PC-3 (cell line): ENCODE measurements at regions of chr12 and their contacts with region 1.

Region 1: DNA sequence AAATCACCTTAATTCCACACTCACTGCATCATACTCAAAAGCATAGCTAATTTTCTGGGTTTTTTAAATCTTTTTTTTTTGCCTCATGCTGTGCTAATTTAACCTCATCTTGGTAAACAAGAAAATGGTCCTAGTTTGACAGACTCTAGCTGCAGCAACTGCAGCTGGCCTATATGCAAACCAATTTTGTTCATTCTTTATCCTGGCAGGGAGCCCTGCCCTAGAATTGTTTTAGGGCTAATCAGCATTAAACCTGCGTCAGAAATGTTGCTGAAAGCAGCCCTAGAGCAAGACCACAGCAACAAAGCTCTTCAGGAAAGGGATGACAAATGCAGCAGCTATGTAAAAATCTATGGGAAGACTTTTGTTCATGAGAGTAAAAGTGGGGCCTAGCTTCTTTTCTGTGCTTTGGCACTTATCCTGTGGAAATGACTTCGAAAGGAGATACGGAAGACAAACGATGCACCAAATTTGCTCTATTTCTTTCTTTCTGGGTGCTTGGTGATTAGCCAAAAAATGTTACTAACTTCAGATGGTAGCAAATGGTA is 72.2 kb downstream of the DENND5B start:
- DNase-seq: peak; percentile 95
- ATAC-seq: peak; percentile 86
- H3K4me3 ChIP-seq: no peak overlapping the region
- H3K27ac ChIP-seq: peak overlapping the region; percentile 98
- H3K4me1 ChIP-seq: peaks cover 45% of the 10 kb centered on the region
- H3K27me3 ChIP-seq: no peaks in the 10 kb centered on the region
- CTCF ChIP-seq: no peak

Region 2: DNA sequence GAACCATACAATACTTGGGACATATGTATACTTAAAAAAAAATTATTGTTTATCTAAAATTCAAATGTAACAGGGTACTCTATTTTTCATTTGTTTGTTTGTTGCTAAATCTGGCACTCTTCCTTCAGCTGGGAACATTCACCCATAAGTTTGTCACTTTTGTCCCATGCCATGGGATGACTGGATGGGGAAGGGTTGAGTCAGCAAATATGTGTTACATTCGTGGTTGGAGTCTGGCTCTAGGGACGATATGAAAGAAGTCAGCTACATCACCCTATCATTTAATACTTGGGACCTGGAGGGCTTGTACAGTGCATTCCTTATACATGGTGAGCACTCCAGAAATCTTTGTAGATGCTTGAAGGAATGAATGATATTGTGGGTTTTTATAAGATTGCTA is 954.4 kb before region 1 on chr12:
- CTCF ChIA-PET with region 1: no interaction called
- POLR2A ChIA-PET with region 1: no interaction called
- intact Hi-C with region 1: no loop called
- DNase-seq: no peak
- ATAC-seq: no peak
- H3K4me3 ChIP-seq: no peak overlapping the region
- H3K27ac ChIP-seq: no peak overlapping the region
- H3K4me1 ChIP-seq: no peaks in the 10 kb centered on the region
- H3K27me3 ChIP-seq: no peaks in the 10 kb centered on the region
- CTCF ChIP-seq: no peak

Region 3: DNA sequence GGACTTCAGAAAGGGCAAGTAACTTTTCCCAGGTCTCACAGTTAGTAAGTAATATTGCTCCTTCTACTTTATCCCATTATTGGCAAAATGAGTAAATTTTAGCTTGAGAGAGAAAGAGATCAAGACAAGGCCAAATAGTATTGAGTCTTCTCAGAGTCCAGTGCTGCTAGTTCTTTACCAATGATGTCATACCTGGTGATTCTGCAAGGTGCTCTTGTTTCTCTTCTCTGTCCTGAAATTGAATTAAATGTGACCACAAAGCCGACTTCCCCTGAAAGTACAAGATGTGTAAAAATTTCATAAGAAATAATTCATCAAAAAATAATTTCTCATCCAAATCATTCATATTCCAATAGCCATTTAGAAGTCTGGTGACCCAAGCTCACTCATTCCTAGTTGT is 95.3 kb before region 1 on chr12:
- CTCF ChIA-PET with region 1: no interaction called
- POLR2A ChIA-PET with region 1: interaction called, 4 read pairs
- intact Hi-C with region 1: loop called (anchors 10 kb)
- DNase-seq: no peak
- ATAC-seq: no peak
- H3K4me3 ChIP-seq: no peak overlapping the region
- H3K27ac ChIP-seq: no peak overlapping the region
- H3K4me1 ChIP-seq: no peaks in the 10 kb centered on the region
- H3K27me3 ChIP-seq: no peaks in the 10 kb centered on the region
- CTCF ChIP-seq: no peak

Region 4: GRCh38 chr12:31471823-31472222 is 46.9 kb before region 1 on chr12:
- CTCF ChIA-PET with region 1: interaction called, 3 read pairs
- POLR2A ChIA-PET with region 1: no interaction called
- intact Hi-C with region 1: loop called (anchors 2 kb)
- DNase-seq: peak; percentile 95
- ATAC-seq: peak; percentile 95
- H3K4me3 ChIP-seq: no peak overlapping the region
- H3K27ac ChIP-seq: peak overlapping the region; percentile 72
- H3K4me1 ChIP-seq: peaks cover 30% of the 10 kb centered on the region
- H3K27me3 ChIP-seq: no peaks in the 10 kb centered on the region
- CTCF ChIP-seq: no peak

Region 5: DNA sequence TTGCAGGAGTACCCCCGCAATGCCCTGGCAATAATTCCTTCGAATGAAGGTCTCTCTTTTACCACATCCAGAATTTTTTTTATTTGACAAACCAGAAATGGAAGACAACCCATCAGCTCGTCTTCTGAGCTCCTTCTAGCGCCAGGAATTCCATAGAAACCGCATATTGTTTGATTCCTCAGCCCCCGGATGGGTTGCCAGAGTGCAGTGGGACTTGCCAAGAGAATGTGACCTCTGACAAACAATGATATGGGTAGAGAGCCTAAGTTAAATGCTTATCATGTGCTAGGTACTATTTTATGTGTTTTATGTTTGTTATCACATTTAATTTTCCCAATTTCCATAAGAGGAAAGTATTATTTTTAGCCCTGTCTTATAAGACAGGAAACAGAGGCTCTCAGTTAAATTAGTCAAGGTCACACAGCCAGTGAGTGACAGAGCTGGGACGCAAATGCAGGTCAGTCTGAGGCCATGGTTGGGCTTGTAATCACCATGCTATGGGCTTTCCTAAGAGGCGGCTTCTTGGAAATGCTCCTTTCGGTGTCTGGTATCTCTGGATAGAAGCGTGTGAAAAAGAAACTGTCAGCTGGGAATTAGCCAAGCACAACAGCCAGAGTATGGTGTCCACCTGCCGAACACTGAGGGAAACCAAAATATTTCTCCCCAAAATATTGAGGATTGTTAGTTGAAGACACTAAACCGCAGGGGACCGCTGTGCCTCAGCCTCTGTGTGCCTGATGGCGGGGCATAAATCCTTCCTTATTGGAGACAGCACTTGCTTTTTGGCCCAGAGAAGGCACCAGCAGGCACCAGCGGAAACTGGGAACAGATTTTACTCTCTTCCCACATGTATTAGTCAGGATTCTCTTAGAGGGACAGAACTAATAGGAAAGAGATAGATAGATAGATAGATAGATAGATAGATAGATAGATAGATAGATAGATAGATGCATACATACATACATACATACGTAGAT is 111.3 kb after region 1 on chr12:
- CTCF ChIA-PET with region 1: no interaction called
- POLR2A ChIA-PET with region 1: no interaction called
- intact Hi-C with region 1: no loop called
- DNase-seq: no peak
- ATAC-seq: no peak
- H3K4me3 ChIP-seq: no peak overlapping the region
- H3K27ac ChIP-seq: no peak overlapping the region
- H3K4me1 ChIP-seq: no peaks in the 10 kb centered on the region
- H3K27me3 ChIP-seq: no peaks in the 10 kb centered on the region
- CTCF ChIP-seq: no peak